Naive thymus-derived CD8-positive, alpha-beta T cell (primary cell): ENCODE measurements at regions of chr2 and their contacts with region 1.

Region 1: DNA sequence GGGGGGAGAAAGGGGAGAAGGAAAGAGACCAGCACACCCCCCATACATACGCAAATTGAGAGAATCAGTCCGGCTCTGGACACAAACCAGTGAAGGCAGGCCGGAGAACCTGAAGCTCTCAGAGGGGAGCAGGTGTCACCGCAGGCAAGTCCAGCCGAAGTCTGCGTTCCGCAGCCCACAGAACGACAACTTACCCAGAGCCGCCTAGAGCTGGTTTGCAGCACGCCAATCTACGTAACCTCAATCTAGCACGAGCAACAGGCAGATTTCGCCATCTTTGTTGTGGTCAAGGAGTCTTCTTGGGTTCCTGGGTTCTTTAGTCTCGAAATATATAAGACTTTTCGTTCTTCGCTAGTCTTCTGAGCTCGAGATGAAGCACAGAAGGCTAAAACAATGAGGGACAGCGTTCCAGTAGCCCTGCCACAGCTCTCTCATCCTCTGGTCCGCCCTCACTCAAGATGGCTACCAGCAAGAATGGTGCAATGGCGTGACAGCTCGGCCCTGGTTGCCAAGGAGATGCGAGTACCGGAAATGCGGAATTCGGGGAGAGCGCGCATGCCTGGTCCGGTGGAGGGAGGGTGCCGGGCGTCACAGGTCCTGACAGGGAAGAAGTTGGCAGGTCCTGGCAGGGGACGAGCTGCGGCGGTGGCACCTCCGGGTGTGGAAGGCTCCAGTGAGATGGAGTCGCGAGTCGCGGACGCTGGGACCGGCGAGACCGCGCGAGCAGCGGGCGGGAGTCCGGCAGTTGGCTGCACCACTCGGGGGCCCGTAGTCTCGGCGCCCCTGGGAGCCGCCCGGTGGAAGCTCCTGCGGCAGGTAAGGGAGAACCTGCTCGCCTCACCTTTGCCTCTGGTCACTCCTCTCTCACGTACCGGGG is at the starts of genes CAMKMT and PREPL:
- DNase-seq: peak; percentile 93 to 99 (median 98)
- ATAC-seq: peak; percentile 84
- H3K4me3 Mint-ChIP-seq: peak within 1 kb of the TSS; percentile 89 to 100 (median 98)
- H3K27ac Mint-ChIP-seq: peak within 1 kb of the TSS; percentile 99 to 100 (median 100)
- H3K4me1 Mint-ChIP-seq: peaks cover 19 to 64% (median 60%) of the 10 kb centered on the region in 4 donors
- H3K27me3 Mint-ChIP-seq: peaks cover 0 to 1% (median 0%) of the 10 kb centered on the region in 5 donors
- polyA plus RNA-seq, gene CAMKMT: 17.8 to 22.9 (median 20.8) TPM
- polyA plus RNA-seq, gene PREPL: 17.7 to 20.8 (median 18.9) TPM

Region 2: DNA sequence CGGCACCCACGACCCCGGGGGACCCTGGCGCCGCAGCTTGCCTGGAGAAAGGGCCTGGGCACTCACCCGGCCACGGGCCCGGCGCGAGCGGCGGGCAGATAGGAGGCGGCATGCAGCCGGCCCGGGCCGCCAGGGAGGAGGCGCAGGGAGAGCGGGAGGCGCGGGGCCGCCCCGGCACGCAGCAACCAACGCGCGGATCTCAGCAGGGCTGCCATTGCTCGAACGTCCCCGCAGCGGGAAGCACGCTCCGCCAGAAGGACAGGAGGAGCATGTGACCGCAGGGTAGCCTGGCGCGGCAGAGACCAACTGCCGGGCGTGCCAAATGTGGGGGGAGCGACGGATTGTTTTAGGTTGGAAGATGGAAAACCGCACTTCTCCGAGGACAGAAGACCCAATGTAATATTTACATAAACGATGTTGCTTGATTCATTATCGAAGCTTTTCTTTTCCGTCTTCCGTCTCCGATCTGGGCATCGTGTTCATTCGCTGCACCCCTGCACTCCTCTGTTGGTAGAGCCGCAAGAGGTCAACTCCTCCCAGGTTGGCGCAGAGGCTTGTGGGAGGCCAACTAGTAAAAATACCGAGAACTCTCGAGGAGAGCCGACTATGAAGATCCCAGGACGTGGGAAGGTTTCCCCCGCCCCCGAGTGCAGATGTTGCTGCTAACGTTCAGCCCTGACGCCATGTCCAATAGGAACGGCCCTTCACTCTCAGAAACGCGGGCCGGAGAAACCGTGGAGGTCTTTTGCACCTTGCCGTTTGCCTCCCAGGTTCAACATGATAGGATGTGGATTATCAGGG is 365.6 kb before region 1 on chr2 and contains the start of gene LRPPRC:
- POLR2A ChIA-PET with region 1: interaction called, 21 read pairs
- DNase-seq: peak; percentile 78 to 95 (median 89)
- ATAC-seq: peak; percentile 94 to 96
- H3K4me3 Mint-ChIP-seq: peak within 1 kb of the TSS; percentile 81 to 97 (median 92)
- H3K27ac Mint-ChIP-seq: peak within 1 kb of the TSS; percentile 92 to 100 (median 99)
- H3K4me1 Mint-ChIP-seq: peaks cover 29 to 55% (median 52%) of the 10 kb centered on the region in 4 donors
- H3K27me3 Mint-ChIP-seq: peaks cover 0 to 7% (median 0%) of the 10 kb centered on the region in 5 donors
- polyA plus RNA-seq, gene LRPPRC: 42.7 to 51.6 (median 43.8) TPM

Region 3: GRCh38 chr2:44167940-44168680 is 193.5 kb before region 1 on chr2:
- POLR2A ChIA-PET with region 1: interaction called, 50 read pairs
- DNase-seq: peak; percentile 85 to 100 (median 98)
- ATAC-seq: peak; percentile 78 to 81
- H3K4me3 Mint-ChIP-seq: peak overlapping the region; percentile 88 to 100 (median 98)
- H3K27ac Mint-ChIP-seq: peak overlapping the region; percentile 98 to 100 (median 100)
- H3K4me1 Mint-ChIP-seq: peaks cover 13 to 42% (median 36%) of the 10 kb centered on the region in 4 donors
- H3K27me3 Mint-ChIP-seq: no peaks in the 10 kb centered on the region

Region 4: DNA sequence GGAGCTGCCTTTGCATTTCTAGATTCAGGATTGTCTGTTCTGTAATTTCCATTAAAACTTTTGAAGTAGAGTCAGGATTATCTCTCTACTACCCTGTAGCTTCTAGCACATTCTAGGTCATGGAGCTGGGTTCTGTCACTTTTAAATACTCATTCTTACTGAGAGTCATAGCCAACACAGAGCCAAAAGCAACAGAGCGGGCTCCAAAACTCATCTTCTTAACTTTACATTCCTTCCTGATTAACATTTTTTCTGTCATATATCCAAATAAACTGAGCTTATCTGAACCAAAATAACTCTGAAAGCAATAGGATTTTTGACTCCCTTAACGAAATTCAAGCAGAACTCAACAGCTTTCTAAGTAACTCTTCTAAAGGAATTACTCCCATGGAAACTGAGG is 13.2 kb before region 1 on chr2:
- POLR2A ChIA-PET with region 1: interaction called, 10 read pairs
- DNase-seq: no peak
- ATAC-seq: no peak
- H3K4me3 Mint-ChIP-seq: no peak overlapping the region
- H3K27ac Mint-ChIP-seq: peak overlapping the region in 3 of 10 donors; percentile 17 to 43 (median 20)
- H3K4me1 Mint-ChIP-seq: peaks cover 13 to 29% (median 21%) of the 10 kb centered on the region in 4 donors
- H3K27me3 Mint-ChIP-seq: no peaks in the 10 kb centered on the region